ENCODE measurements at regions of chr3 and their contacts with region 1.

Region 1: DNA sequence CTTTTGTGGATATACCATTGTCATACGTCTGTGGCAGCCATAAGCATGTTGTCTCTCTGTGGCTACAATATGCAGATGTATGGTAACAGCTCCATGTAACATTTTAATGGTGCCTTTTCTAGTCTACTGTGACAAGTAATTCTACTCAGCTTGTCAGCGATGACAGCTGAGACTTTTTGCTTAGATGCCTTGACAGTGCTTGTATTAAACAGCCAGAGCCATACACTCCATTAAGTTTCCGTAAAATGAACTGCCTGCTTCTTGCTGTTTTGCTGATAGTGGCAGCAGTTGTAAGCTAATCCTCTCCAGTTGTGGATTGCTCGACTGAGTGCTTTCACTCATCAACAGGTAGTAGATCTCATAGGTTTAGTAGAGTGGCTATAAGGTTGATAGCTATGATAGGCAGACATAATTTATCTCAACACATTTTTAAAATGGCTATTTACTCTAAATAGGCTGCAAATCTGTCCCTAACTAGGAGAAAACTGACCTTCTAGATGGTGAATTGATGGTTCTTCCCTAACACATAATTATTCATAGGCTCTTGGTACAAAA is 260.2 kb upstream of the NAALADL2 start:
- DNase-seq: no peak
- H3K4me3 ChIP-seq: no peak overlapping the region
- H3K27ac ChIP-seq: no peak overlapping the region
- H3K4me1 ChIP-seq: no peaks in the 10 kb centered on the region
- H3K27me3 ChIP-seq: no peaks in the 10 kb centered on the region
- CTCF ChIP-seq: no peak

Region 2: GRCh38 chr3:174581558-174581957 is 17.4 kb before region 1 on chr3:
- CTCF ChIA-PET with region 1: no interaction called
- POLR2A ChIA-PET with region 1: no interaction called
- intact Hi-C with region 1: loop called (anchors 2 kb)
- DNase-seq: no peak
- H3K4me3 ChIP-seq: no peak overlapping the region
- H3K27ac ChIP-seq: no peak overlapping the region
- H3K4me1 ChIP-seq: no peaks in the 10 kb centered on the region
- H3K27me3 ChIP-seq: no peaks in the 10 kb centered on the region
- CTCF ChIP-seq: no peak

Measured in PC-9 (cell line).